Right ventricle myocardium inferior (tissue), 1 donor: ENCODE measurements at regions of chr19 and their contacts with region 1.

Region 1: GRCh38 chr19:3163230-3163886 is 15.2 kb upstream of the S1PR4 start:
- DNase-seq: peak; percentile 90
- ATAC-seq: peak; percentile 82

Region 2: GRCh38 chr19:2887391-2887914 is 275.9 kb before region 1 on chr19:
- intact Hi-C with region 1: loop called (anchors 1 kb)
- DNase-seq: no peak
- ATAC-seq: peak; percentile 70

Region 3: DNA sequence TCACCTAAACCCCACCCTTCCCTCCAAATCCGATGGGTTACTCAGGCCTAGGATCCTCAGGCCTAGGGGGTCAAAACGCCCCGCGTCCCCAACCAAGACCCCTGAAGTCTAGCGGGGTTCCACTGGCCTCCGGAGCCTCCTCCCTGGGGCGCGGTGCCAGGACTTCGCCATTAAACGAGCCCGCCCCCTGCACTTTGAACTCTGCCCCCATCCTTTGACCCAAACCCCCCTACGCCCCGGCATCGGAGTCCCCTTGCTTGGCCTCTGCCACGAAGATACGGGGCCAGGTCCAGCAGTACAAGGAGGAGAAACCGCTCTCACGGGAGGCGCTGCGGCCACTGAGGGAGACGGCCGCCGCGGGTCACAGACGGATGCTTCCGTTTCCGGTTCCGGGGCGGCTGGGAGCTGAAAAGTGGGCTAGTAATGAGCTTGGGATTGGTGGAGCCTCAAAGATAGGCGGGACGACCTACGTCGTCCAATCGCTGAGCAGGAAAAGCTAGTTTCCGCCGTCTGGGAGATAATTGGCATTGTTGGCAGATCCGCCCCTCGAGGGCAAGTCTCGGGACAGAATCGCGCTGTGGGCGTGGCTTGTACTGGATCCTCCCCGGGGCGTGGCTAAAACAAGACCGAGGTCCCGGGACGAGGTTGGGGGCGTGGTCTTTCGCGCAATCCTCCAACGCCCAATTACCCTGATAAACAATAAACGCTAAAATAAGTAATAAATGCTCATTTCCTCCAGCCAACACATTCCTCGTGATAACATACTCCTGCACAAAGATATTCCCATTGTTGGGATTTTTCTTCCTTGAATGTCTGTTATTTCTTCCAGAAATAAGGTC is 212.9 kb before region 1 on chr19:
- intact Hi-C with region 1: loop called (anchors 5 kb)
- DNase-seq: peak; percentile 100
- ATAC-seq: peak; percentile 98

Region 4: GRCh38 chr19:2962045-2962561 is 201.3 kb before region 1 on chr19:
- intact Hi-C with region 1: loop called (anchors 1 kb)
- DNase-seq: no peak
- ATAC-seq: peak; percentile 90

Region 5: GRCh38 chr19:3075895-3076431 is 87.4 kb before region 1 on chr19:
- intact Hi-C with region 1: loop called (anchors 1 kb)
- DNase-seq: no peak
- ATAC-seq: peak; percentile 35

Region 6: GRCh38 chr19:3125900-3126524 is 37.3 kb before region 1 on chr19:
- intact Hi-C with region 1: loop called (anchors 5 kb)
- DNase-seq: peak; percentile 83
- ATAC-seq: peak; percentile 58